GM12878 (cell line): ENCODE measurements at regions of chr17 and their contacts with region 1.

Region 1: GRCh38 chr17:34146440-34147043 is 108.5 kb upstream of the CCL2 start:
- DNase-seq: no peak
- ATAC-seq: peak; percentile 87
- H3K4me3 ChIP-seq: no peak overlapping the region
- H3K27ac ChIP-seq: no peak overlapping the region
- H3K4me1 ChIP-seq: no peaks in the 10 kb centered on the region
- H3K27me3 ChIP-seq: no peaks in the 10 kb centered on the region
- CTCF ChIP-seq: peak; percentile 85 to 87 (median 87); a peak in 5 of 6 replicates
- EP300 ChIP-seq: no peak
- POLR2A ChIP-seq: no peak
- RAD21 ChIP-seq: peak; percentile 88

Region 2: GRCh38 chr17:33779225-33779591 is 367.3 kb before region 1 on chr17:
- CTCF ChIA-PET with region 1: interaction called, 48 read pairs
- POLR2A ChIA-PET with region 1: no interaction called
- RAD21 ChIA-PET with region 1: interaction called, 4 read pairs
- SMC1A ChIA-PET with region 1: interaction called, 13 read pairs
- in situ Hi-C with region 1: loop called (anchors 5 kb)
- intact Hi-C with region 1: loop called (anchors 1 kb)
- DNase-seq: peak; percentile 2
- ATAC-seq: peak; percentile 53
- H3K4me3 ChIP-seq: no peak overlapping the region
- H3K27ac ChIP-seq: no peak overlapping the region
- H3K4me1 ChIP-seq: no peaks in the 10 kb centered on the region
- H3K27me3 ChIP-seq: no peaks in the 10 kb centered on the region; a peak in 1 of 4 replicates
- CTCF ChIP-seq: peak; percentile 80 to 94 (median 89)
- EP300 ChIP-seq: no peak
- POLR2A ChIP-seq: no peak
- RAD21 ChIP-seq: peak; percentile 73

Region 3: DNA sequence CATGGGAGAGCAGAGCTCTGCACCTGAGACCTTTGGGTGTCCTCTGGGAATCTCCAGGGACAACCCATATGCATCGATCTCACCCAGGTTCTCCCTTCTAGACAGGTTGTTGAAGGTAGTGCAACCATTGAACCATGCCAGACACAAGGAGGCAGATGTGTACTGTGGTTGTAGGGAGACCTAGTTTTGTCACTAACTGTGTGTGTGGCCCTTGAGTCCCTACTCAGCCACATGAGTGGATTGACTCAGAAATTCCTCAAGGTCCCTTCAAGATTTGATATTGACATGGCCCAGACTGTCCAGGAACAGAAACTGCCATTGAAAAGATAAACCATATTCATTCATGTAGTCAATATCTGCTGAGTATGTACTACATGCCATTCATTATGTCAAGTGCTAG is 287.9 kb before region 1 on chr17:
- CTCF ChIA-PET with region 1: no interaction called
- POLR2A ChIA-PET with region 1: no interaction called
- RAD21 ChIA-PET with region 1: no interaction called
- SMC1A ChIA-PET with region 1: no interaction called
- in situ Hi-C with region 1: no loop called
- intact Hi-C with region 1: loop called (anchors 5 kb)
- DNase-seq: no peak
- ATAC-seq: no peak
- H3K4me3 ChIP-seq: no peak overlapping the region
- H3K27ac ChIP-seq: no peak overlapping the region
- H3K4me1 ChIP-seq: no peaks in the 10 kb centered on the region
- H3K27me3 ChIP-seq: no peaks in the 10 kb centered on the region; a peak in 1 of 4 replicates
- CTCF ChIP-seq: no peak
- EP300 ChIP-seq: no peak
- POLR2A ChIP-seq: no peak
- RAD21 ChIP-seq: no peak

Region 4: DNA sequence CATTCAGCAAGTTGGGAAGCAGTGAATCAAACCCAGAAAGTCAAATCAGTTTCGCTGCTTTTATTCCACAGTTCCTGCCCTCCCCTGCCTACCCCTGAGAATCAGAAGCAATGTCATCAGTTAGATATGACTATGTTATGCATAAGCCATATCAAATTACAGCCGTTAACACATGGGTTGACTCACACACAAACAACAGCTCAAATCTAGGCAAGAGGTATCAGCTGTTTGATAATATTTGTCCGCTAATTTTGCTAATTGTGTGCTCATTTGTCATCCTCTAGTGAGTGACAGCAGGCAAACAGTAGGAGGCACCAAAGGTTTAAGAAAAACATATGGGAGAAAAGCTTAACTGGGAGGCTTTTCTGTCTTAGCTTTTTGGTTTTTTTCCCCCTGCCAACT is 218.8 kb before region 1 on chr17:
- CTCF ChIA-PET with region 1: interaction called, 14 read pairs
- POLR2A ChIA-PET with region 1: no interaction called
- RAD21 ChIA-PET with region 1: interaction called, 7 read pairs
- SMC1A ChIA-PET with region 1: interaction called, 6 read pairs
- in situ Hi-C with region 1: loop called (anchors 5 kb)
- intact Hi-C with region 1: loop called (anchors 1 kb)
- DNase-seq: no peak
- ATAC-seq: no peak
- H3K4me3 ChIP-seq: no peak overlapping the region
- H3K27ac ChIP-seq: no peak overlapping the region
- H3K4me1 ChIP-seq: no peaks in the 10 kb centered on the region
- H3K27me3 ChIP-seq: peaks cover 2 to 5% of the 10 kb centered on the region in 2 experiments; a peak in 3 of 4 replicates
- CTCF ChIP-seq: peak; percentile 34 to 66 (median 52); a peak in 5 of 6 replicates
- EP300 ChIP-seq: no peak
- POLR2A ChIP-seq: no peak
- RAD21 ChIP-seq: peak; percentile 69

Region 5: DNA sequence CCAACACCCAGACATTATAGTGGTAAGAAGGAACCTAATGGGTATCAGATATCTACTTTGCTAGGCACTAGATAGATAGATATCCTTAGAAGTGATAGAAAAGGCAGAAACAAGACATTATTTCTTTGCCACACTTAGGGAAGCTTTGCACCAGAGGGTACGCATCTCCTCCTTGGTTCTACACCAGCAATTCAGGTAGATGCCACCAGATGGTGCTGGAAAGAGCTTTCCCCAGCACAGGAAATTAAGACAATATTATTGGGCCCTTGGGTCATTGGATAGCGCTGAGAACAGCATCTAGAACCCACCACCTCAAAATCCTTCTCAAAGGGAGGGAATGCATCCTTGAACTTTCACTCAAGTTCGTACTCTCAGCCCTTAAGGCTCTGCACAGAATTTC is 65.3 kb before region 1 on chr17:
- CTCF ChIA-PET with region 1: interaction called, 6 read pairs
- POLR2A ChIA-PET with region 1: no interaction called
- RAD21 ChIA-PET with region 1: no interaction called
- SMC1A ChIA-PET with region 1: no interaction called
- in situ Hi-C with region 1: no loop called
- intact Hi-C with region 1: loop called (anchors 2 kb)
- DNase-seq: no peak
- ATAC-seq: peak; percentile 44; the same call in 1 of the 3 replicates
- H3K4me3 ChIP-seq: no peak overlapping the region
- H3K27ac ChIP-seq: no peak overlapping the region
- H3K4me1 ChIP-seq: no peaks in the 10 kb centered on the region
- H3K27me3 ChIP-seq: no peaks in the 10 kb centered on the region; a peak in 1 of 4 replicates
- CTCF ChIP-seq: peak; percentile 36 to 48 (median 47); a peak in 5 of 6 replicates
- EP300 ChIP-seq: no peak
- POLR2A ChIP-seq: no peak
- RAD21 ChIP-seq: peak; percentile 46; the same call in 1 of the 2 replicates